ENCODE measurements at regions of chr1 and their contacts with region 1.

Region 1: GRCh38 chr1:165392634-165393571 is 36.4 kb upstream of the LMX1A start:
- H3K4me3 ChIP-seq: peak overlapping the region; percentile 28
- H3K27ac ChIP-seq: no peak overlapping the region
- H3K4me1 ChIP-seq: no peaks in the 10 kb centered on the region
- CTCF ChIP-seq: peak; percentile 91

Region 2: DNA sequence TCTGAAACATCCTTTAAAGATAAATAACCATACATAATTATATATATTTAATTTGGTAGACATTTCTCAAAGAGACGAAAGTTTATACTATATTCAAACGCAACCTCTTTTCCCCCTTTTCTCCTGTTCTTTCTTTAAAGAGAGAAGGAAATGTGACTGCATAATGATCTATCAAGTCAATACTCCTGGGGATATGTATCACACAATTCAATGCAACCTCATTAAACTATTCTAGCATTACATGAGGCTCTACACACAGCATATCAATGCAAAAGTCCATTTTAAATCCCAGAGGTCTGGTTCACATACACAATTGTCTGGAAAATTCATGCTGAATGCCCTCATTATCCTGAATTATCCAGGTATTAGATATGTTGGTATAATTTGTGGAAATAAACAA is 367.1 kb before region 1 on chr1:
- CTCF ChIA-PET with region 1: no interaction called
- POLR2A ChIA-PET with region 1: no interaction called
- H3K4me3 ChIP-seq: no peak overlapping the region
- H3K27ac ChIP-seq: no peak overlapping the region
- H3K4me1 ChIP-seq: no peaks in the 10 kb centered on the region
- CTCF ChIP-seq: no peak

Region 3: GRCh38 chr1:165376041-165376810 is 16.7 kb before region 1 on chr1:
- CTCF ChIA-PET with region 1: interaction called, 27 read pairs
- POLR2A ChIA-PET with region 1: interaction called, 6 read pairs
- H3K4me3 ChIP-seq: no peak overlapping the region; the same call in 1 of the 2 replicates
- H3K27ac ChIP-seq: peak overlapping the region; percentile 78
- H3K4me1 ChIP-seq: peaks cover 10% of the 10 kb centered on the region
- CTCF ChIP-seq: no peak

Region 4: DNA sequence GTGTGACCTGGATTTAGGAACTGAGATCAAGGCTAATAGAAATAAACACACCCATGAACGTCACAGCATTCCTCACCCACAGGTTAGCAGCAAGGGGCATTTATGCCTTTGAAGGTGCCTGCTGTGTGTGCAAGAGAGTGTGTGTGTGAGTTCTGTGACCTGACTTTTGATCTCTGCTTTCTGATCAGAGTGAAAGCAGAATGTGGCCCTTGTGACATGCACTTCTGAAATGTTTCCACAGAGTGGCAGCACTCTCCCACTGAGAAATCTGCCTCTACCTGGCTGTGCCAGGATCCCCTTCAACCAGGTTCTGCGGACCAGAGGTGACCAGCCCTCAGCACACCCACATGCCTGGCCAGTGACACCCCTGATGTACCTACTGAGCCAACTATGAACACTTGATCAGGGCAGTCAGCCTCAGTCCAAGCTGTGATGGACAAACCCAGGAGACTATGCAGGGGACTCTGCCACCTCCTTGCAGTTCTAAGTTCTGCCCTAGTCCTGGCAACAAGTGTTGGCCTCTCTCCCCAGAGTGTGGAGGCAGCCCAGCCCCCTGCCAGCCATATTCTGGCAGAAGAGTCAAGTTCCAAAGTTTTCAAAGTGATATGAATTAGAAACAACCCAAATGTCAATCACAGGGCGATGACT is 11.1 kb after region 1 on chr1:
- CTCF ChIA-PET with region 1: interaction called, 41 read pairs
- POLR2A ChIA-PET with region 1: no interaction called
- H3K4me3 ChIP-seq: no peak overlapping the region
- H3K27ac ChIP-seq: no peak overlapping the region
- H3K4me1 ChIP-seq: no peaks in the 10 kb centered on the region
- CTCF ChIP-seq: peak; percentile 87

Region 5: DNA sequence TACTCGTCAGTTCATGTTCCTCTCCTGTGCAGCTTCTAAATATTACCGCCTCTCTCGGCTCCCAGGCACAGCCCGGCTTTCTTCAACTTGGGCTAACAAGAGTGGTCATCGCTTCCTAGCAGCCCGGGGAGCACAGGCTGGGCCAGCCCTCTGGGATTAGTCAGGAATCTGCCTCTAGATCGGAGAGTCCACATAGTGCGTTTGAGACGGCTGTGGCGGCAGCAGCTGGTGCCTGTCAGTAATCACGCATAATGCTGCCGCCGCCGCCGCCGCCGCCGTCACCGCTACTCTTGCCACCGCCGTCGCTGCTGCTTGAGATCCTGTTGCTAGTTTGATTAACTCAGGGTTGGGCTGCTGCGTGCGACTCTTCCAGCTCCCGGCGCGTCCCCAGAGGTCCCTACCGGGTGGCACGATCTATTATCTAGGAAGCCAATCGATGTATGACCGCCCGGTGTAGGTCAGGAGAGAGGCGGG is 52.0 kb after region 1 on chr1 and contains the start of gene RXRG:
- CTCF ChIA-PET with region 1: interaction called, 11 read pairs
- POLR2A ChIA-PET with region 1: no interaction called
- H3K4me3 ChIP-seq: peak within 1 kb of the TSS; percentile 36
- H3K27ac ChIP-seq: no peak within 1 kb of the TSS
- H3K4me1 ChIP-seq: no peaks in the 10 kb centered on the region
- CTCF ChIP-seq: no peak

Region 6: DNA sequence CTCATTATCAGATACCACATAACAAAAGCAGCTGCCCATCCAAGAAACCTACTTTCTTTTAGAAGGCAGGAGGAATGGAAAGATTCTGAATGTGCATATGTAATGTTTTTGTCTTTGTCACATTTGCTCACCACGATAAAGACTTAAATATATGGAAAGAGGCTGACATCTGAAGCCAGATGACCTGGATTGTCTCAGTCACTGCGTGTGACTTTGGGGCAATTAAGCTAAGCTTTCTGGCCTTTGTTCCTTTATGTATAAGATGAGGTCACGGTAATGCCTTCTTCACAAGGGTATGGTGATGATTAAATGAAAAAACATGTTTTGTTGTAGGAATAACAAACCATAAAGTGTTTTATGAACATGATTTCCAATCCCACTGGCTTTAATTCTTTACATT is 193.5 kb after region 1 on chr1:
- CTCF ChIA-PET with region 1: interaction called, 108 read pairs
- POLR2A ChIA-PET with region 1: no interaction called
- H3K4me3 ChIP-seq: no peak overlapping the region
- H3K27ac ChIP-seq: no peak overlapping the region
- H3K4me1 ChIP-seq: no peaks in the 10 kb centered on the region
- CTCF ChIP-seq: no peak

Measured in HEK293 (cell line).